Panc1 (cell line): ENCODE measurements at regions of chr11 and their contacts with region 1.

Region 1: GRCh38 chr11:124865921-124866583 is 820 bp downstream of the ROBO3 start:
- DNase-seq: no peak
- ATAC-seq: peak; percentile 46; the same call in 1 of the 2 replicates
- H3K4me3 ChIP-seq: peak overlapping the region; percentile 21 to 43
- H3K27ac ChIP-seq: no peak overlapping the region
- H3K4me1 ChIP-seq: peaks cover 28% of the 10 kb centered on the region
- H3K27me3 ChIP-seq: peaks cover 82% of the 10 kb centered on the region
- CTCF ChIP-seq: peak; percentile 95

Region 2: DNA sequence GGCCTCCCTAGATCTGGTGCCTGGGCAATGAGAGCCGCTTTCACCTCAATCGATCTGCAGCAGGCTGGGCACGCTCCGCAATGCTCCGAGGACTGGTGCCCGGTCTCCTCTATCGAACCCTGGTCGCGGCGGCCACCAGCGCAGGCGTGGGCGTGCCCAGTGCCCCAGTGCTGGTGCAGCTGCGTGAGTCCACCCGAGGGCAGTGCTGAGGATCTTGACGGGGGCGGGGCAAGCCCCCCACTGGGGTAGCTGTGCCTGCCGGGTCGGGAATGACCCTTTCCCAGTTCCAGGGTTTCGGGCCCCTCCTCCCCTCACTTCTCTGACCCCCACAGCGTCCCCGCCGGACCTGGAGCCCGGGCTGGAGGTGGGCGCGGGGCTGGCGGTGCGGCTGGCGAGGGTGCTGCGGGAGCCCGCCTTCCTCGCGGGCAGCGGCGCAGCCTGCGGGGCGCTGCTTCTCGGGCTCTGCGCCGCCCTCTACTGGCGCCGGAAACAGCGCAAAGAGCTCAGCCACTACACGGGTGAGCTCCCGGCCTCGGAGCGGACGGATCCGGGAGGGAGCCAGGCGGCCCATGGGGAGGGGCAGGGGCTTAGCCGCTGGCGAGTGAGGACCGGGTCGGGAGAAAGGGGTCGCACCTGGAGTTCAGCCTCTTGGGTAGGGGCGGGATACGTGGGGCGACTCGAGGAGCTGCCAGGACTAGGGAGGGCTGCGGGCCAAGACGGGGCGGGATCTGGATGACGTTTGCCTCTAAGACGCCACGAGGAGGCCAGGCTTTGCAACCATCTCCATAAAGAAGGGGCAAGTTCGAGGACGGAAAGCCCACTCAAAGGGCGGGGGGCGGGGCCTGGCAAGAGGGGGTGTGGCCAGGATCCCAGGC is 10.1 kb after region 1 on chr11:
- CTCF ChIA-PET with region 1: interaction called, 14 read pairs
- POLR2A ChIA-PET with region 1: no interaction called
- in situ Hi-C with region 1: no loop called
- intact Hi-C with region 1: no loop called
- DNase-seq: peak; percentile 73
- ATAC-seq: peak; percentile 96
- H3K4me3 ChIP-seq: peak overlapping the region; percentile 65 to 68
- H3K27ac ChIP-seq: peak overlapping the region; percentile 89
- H3K4me1 ChIP-seq: peaks cover 4% of the 10 kb centered on the region
- H3K27me3 ChIP-seq: peaks cover 19% of the 10 kb centered on the region
- CTCF ChIP-seq: peak; percentile 98

Region 3: GRCh38 chr11:124920870-124921609 is 55.0 kb after region 1 on chr11:
- CTCF ChIA-PET with region 1: no interaction called
- POLR2A ChIA-PET with region 1: no interaction called
- in situ Hi-C with region 1: no loop called
- intact Hi-C with region 1: no loop called
- DNase-seq: no peak
- ATAC-seq: 0 out of 2 replicates have a peak, but pooled peaks have one; percentile 34
- H3K4me3 ChIP-seq: no peak overlapping the region
- H3K27ac ChIP-seq: no peak overlapping the region
- H3K4me1 ChIP-seq: no peaks in the 10 kb centered on the region
- H3K27me3 ChIP-seq: no peaks in the 10 kb centered on the region; the same call in 1 of the 2 replicates
- CTCF ChIP-seq: no peak